CD14-positive monocyte (primary cell): ENCODE measurements at regions of chr4 and their contacts with region 1.

Region 1: GRCh38 chr4:138967313-138967712 is 48.3 kb upstream of the NOCT start:
- DNase-seq: peak; percentile 92 to 97 (median 95)
- H3K4me3 ChIP-seq: no peak overlapping the region
- H3K4me3 Mint-ChIP-seq: no peak overlapping the region
- H3K27ac ChIP-seq: peak overlapping the region in 1 of 2 donors; percentile 69
- H3K27ac Mint-ChIP-seq: peak overlapping the region; percentile 82 to 92 (median 88)
- H3K4me1 ChIP-seq: peaks cover 30 to 34% of the 10 kb centered on the region in 2 donors
- H3K4me1 Mint-ChIP-seq: peaks cover 31% of the 10 kb centered on the region
- H3K27me3 ChIP-seq: no peaks in the 10 kb centered on the region
- H3K27me3 Mint-ChIP-seq: peaks cover 0 to 1% (median 0%) of the 10 kb centered on the region in 3 donors
- CTCF ChIP-seq: no peak

Region 2: DNA sequence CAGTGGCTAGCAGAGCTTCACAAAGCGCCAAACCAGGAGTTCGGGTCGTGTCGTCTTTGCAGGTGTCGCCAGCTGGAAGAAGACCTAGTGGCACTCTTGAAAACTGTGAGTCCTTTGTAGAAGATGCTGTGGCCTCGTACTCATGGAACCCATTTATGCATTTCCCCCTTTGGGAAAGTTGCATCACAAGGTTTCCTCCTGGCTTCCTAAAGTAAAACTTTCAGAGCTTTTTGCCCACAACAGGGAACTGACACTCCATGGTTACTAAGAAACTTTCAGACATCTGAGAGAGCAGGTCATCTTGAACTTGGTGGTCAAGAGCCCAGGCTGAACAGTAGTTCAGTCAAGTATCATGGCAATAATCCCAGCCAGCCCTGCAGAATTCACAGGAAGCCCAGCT is 32.4 kb after region 1 on chr4:
- intact Hi-C with region 1: loop called in 1 of 2 experiments (anchors 5 kb)
- DNase-seq: peak; percentile 48 to 72 (median 69)
- H3K4me3 ChIP-seq: no peak overlapping the region
- H3K4me3 Mint-ChIP-seq: no peak overlapping the region
- H3K27ac ChIP-seq: peak overlapping the region; percentile 55 to 63
- H3K27ac Mint-ChIP-seq: peak overlapping the region; percentile 79 to 92 (median 86)
- H3K4me1 ChIP-seq: peaks cover 38 to 41% of the 10 kb centered on the region in 2 donors
- H3K4me1 Mint-ChIP-seq: peaks cover 41% of the 10 kb centered on the region
- H3K27me3 ChIP-seq: no peaks in the 10 kb centered on the region
- H3K27me3 Mint-ChIP-seq: peaks cover 0 to 7% (median 0%) of the 10 kb centered on the region in 3 donors
- CTCF ChIP-seq: no peak

Region 3: DNA sequence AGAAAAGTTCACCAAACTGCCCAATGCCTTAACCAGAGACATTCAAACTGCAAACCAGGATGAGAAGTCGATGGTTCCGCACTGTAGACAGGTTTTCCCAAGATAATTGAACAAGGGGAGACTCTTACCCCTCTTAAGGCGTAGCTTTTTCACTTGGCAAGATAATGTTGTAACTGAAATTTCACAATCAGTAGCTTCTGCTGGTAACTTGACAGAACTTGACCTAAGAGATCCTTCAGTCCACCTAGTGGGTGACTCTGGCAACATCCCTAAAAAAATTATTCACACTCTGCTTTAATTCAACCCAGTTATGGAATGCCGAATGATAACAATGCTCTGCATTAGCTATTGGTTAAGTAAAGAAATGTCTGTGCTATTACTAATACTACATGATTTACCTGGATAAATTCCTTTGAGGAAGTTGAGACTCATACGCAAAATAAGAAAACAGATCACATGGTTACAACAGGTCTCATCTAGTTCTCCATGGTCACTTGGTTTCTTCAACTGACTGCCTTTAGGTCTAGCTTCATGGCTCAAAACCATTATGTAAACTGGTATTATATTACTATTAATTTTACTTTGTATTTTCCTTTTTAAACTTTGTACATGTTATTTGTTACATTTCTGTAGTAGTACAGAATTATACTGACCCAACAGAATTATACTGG is 200.6 kb after region 1 on chr4:
- intact Hi-C with region 1: no loop called
- DNase-seq: peak; percentile 49 to 91 (median 75)
- H3K4me3 ChIP-seq: peak overlapping the region in 1 of 3 experiments; percentile 30
- H3K4me3 Mint-ChIP-seq: peak overlapping the region in 1 of 2 donors; percentile 69
- H3K27ac ChIP-seq: peak overlapping the region in 1 of 2 donors; percentile 62
- H3K27ac Mint-ChIP-seq: peak overlapping the region; percentile 25 to 92 (median 83)
- H3K4me1 ChIP-seq: peaks cover 22 to 43% of the 10 kb centered on the region in 2 donors
- H3K4me1 Mint-ChIP-seq: peaks cover 52% of the 10 kb centered on the region
- H3K27me3 ChIP-seq: no peaks in the 10 kb centered on the region
- H3K27me3 Mint-ChIP-seq: no peaks in the 10 kb centered on the region
- CTCF ChIP-seq: peak; percentile 89

Region 4: DNA sequence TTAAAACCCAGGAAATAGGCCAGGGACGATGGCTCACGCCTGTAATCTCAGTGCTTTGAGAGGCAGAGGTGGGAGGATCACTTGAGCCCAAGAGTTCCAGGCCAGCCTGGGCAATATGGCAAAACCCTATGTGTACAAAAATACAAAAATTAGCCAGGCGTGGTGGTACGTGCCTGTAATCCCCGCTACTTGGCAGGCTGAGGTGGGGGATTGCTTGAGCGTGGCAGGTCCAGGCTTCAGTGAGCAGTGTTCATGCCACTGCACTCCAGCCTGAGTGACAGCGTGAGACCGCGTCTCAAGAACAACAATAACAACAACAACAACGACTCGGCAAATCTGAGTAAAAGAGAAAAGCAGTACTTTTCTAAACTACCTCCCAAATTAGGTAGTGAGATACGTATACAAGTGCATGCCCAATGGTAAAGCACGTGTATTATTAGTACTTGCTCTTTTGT is 347.9 kb after region 1 on chr4:
- intact Hi-C with region 1: no loop called
- DNase-seq: no peak
- H3K4me3 ChIP-seq: no peak overlapping the region
- H3K4me3 Mint-ChIP-seq: no peak overlapping the region
- H3K27ac ChIP-seq: peak overlapping the region in 1 of 2 donors; percentile 28
- H3K27ac Mint-ChIP-seq: peak overlapping the region in 3 of 7 donors; percentile 42 to 82 (median 73)
- H3K4me1 ChIP-seq: peaks cover 18 to 20% of the 10 kb centered on the region in 2 donors
- H3K4me1 Mint-ChIP-seq: peaks cover 51% of the 10 kb centered on the region
- H3K27me3 ChIP-seq: no peaks in the 10 kb centered on the region
- H3K27me3 Mint-ChIP-seq: no peaks in the 10 kb centered on the region
- CTCF ChIP-seq: no peak